ENCODE measurements at regions of chr6 and their contacts with region 1.

Region 1: GRCh38 chr6:133923938-133924593 is 29.0 kb upstream of the TBPL1 start:
- DNase-seq: peak; percentile 74
- H3K4me3 Mint-ChIP-seq: no peak overlapping the region
- H3K27ac Mint-ChIP-seq: no peak overlapping the region
- H3K4me1 Mint-ChIP-seq: no peaks in the 10 kb centered on the region
- H3K27me3 Mint-ChIP-seq: peaks cover 19% of the 10 kb centered on the region

Region 2: GRCh38 chr6:133871131-133871530 is 52.9 kb before region 1 on chr6:
- CTCF ChIA-PET with region 1: no interaction called
- intact Hi-C with region 1: no loop called
- DNase-seq: no peak
- H3K4me3 Mint-ChIP-seq: no peak overlapping the region
- H3K27ac Mint-ChIP-seq: no peak overlapping the region
- H3K4me1 Mint-ChIP-seq: no peaks in the 10 kb centered on the region
- H3K27me3 Mint-ChIP-seq: peaks cover 14% of the 10 kb centered on the region

Region 3: GRCh38 chr6:133939778-133940667 is 16.0 kb after region 1 on chr6:
- CTCF ChIA-PET with region 1: interaction called, 15 read pairs
- intact Hi-C with region 1: no loop called
- DNase-seq: no peak
- H3K4me3 Mint-ChIP-seq: no peak overlapping the region
- H3K27ac Mint-ChIP-seq: no peak overlapping the region
- H3K4me1 Mint-ChIP-seq: no peaks in the 10 kb centered on the region
- H3K27me3 Mint-ChIP-seq: peaks cover 16% of the 10 kb centered on the region

Region 4: DNA sequence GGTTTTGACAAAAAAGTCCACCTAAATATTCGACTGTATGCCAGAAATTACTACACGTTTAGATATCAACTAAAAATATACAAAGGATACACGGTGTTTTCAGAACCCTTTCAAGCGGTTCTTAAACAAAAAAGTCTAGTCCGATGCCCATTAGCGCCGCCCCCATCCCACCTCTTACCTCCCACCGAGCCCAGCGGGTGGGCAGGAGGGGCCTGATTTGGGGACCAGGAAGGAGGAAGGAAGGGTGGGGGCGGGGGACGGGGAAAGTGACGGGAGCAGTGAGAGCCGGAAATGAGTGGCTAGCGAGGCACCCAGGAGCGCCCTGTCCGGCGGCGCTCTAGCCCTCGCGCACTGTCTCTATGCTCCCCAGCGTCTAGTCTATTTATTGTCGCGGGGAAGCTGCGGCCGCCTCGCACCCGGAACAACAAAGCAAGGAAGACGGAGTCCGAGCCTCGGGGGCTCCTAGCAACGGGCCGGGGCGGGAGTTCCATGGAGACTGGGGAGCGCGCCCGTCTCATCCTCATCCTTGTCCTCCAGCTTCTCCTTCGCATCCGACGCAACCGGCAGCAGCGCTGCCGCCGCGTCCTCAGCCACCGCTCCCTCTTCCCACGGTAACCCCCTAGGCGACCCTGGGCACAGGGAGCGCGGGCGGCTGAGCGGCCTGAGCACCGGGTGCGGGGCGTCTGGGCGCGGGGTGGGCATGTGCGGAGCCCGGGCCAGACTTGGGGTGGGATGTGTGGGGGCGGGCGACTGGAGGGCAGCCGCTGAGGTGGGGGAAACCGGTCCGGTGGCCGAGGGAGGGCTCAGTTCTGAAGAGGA is 29.0 kb after region 1 on chr6 and contains the start of gene TBPL1:
- CTCF ChIA-PET with region 1: interaction called, 15 read pairs
- intact Hi-C with region 1: loop called (anchors 1 kb)
- DNase-seq: peak; percentile 92
- H3K4me3 Mint-ChIP-seq: peak within 1 kb of the TSS; percentile 87
- H3K27ac Mint-ChIP-seq: peak within 1 kb of the TSS; percentile 86
- H3K4me1 Mint-ChIP-seq: peaks cover 36% of the 10 kb centered on the region
- H3K27me3 Mint-ChIP-seq: no peaks in the 10 kb centered on the region
- total RNA-seq, gene TBPL1: 27.0 to 27.6 TPM

Region 5: GRCh38 chr6:133973109-133973971 is 49.3 kb after region 1 on chr6:
- CTCF ChIA-PET with region 1: interaction called, 36 read pairs
- intact Hi-C with region 1: loop called (anchors 1 kb)
- DNase-seq: no peak
- H3K4me3 Mint-ChIP-seq: no peak overlapping the region
- H3K27ac Mint-ChIP-seq: no peak overlapping the region
- H3K4me1 Mint-ChIP-seq: peaks cover 32% of the 10 kb centered on the region
- H3K27me3 Mint-ChIP-seq: no peaks in the 10 kb centered on the region

Region 6: DNA sequence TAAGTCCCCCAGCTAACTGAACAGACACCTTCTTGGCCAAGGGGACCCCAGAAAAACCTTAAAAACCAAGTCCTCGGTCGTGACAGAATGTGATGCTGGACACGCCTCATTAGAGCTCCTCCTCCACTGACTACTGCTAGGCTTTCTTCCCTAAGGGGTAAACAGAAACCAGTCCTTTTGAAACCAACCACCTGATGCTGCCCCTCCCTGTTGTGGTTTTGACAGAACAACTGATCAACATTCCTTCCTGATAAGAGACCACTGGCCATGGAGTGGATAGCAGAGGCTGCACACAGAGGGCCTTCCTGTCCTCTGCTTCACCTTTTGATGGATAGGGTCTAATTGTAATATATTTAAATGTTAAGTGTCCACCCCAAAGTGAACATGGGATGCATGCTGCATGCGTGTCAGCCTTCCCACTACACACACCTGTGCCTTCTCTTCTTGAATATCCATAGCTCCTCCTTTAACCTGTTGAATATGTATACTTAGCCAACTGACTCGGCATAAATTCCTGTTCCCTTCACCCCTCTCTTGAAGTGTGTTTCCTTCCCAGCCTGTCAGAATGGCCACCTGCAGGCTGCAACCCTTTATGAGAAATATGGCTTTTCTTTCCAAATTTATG is 156.2 kb after region 1 on chr6:
- CTCF ChIA-PET with region 1: interaction called, 17 read pairs
- intact Hi-C with region 1: no loop called
- DNase-seq: no peak
- H3K4me3 Mint-ChIP-seq: no peak overlapping the region
- H3K27ac Mint-ChIP-seq: no peak overlapping the region
- H3K4me1 Mint-ChIP-seq: peaks cover 9% of the 10 kb centered on the region
- H3K27me3 Mint-ChIP-seq: no peaks in the 10 kb centered on the region

Region 7: GRCh38 chr6:134111062-134111677 is 187.1 kb after region 1 on chr6:
- CTCF ChIA-PET with region 1: interaction called, 22 read pairs
- intact Hi-C with region 1: no loop called
- DNase-seq: peak; percentile 65
- H3K4me3 Mint-ChIP-seq: no peak overlapping the region
- H3K27ac Mint-ChIP-seq: no peak overlapping the region
- H3K4me1 Mint-ChIP-seq: peaks cover 2% of the 10 kb centered on the region
- H3K27me3 Mint-ChIP-seq: peaks cover 11% of the 10 kb centered on the region

Region 8: DNA sequence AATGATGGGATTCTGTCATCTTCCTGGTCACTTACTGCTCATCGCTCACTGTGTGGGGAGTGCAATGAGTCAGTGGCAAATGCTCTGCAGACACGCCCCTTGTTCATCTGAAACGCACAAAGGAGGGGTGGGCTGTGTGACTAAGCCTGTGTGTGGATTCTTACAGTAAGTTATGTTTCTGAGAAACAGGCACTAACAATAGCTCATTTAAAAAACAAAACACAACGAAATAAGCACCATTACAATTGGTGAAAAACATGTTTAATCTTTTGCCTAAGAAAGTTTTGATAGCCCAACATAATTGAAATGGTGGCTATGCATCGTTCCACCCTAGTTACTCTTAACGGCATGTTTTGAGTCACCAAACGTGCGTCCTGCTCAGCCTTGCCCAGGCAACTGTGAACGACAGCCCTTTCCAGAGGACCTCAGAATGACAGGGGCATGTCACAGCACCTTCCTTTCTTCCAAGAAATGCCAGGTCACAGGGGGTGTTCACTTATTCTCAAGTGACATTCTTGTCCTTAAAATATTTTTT is 512.3 kb after region 1 on chr6:
- CTCF ChIA-PET with region 1: no interaction called
- intact Hi-C with region 1: no loop called
- DNase-seq: peak; percentile 88
- H3K4me3 Mint-ChIP-seq: peak overlapping the region; percentile 44
- H3K27ac Mint-ChIP-seq: peak overlapping the region; percentile 86
- H3K4me1 Mint-ChIP-seq: peaks cover 31% of the 10 kb centered on the region
- H3K27me3 Mint-ChIP-seq: no peaks in the 10 kb centered on the region